CD4-positive, alpha-beta memory T cell (primary cell): ENCODE measurements at regions of chr21 and their contacts with region 1.

Region 1: DNA sequence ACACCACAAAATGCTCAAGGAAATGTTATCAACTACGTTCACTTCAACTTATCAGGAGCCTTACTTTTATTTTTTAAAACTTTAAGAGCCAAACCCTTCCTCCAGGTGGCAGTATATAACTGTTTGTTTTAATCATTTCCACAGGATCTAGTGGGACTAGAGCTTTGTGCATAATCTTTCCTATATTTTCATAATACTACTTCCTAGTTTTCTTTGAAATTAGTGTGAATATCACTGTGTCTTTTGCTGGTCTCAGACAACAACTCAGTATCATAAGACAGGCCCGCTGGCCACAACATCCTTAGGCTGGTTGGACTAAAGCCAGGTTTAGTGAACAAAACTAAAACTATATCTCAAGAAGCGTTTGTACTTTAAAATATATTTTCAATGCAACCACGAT is 145.5 kb downstream of the TIAM1 start:
- DNase-seq: peak in 3 of 5 donors; percentile 37 to 62 (median 54)
- H3K4me3 ChIP-seq: no peak overlapping the region
- H3K4me3 Mint-ChIP-seq: peak overlapping the region in 1 of 8 donors; percentile 31
- H3K27ac ChIP-seq: no peak overlapping the region
- H3K27ac Mint-ChIP-seq: peak overlapping the region in 2 of 7 donors; percentile 4 to 12
- H3K4me1 ChIP-seq: peaks cover 19% of the 10 kb centered on the region
- H3K4me1 Mint-ChIP-seq: peaks cover 21 to 41% (median 27%) of the 10 kb centered on the region in 4 donors
- H3K27me3 ChIP-seq: no peaks in the 10 kb centered on the region
- H3K27me3 Mint-ChIP-seq: no peaks in the 10 kb centered on the region

Region 2: DNA sequence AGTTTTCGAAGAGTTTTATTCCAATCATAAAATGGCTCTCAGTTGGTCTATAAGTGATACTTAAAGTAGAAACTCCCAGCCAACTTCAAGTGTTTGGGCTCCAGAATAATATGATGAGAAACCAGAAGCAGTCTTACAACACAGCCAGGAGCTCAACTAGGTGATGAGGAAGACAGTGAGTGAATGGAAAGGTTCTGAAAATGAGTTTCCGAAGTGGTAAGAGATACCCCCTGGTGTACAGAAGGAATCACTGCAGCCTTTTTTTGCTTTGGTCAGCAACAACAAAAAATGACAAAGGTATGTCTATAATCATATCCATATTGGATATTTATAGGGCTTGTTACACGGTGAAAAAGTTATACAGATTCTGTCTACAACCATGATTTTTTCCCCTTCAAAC is 734.9 kb before region 1 on chr21:
- CTCF ChIA-PET with region 1: no interaction called
- POLR2A ChIA-PET with region 1: no interaction called
- intact Hi-C with region 1: no loop called
- DNase-seq: no peak
- H3K4me3 ChIP-seq: no peak overlapping the region
- H3K4me3 Mint-ChIP-seq: no peak overlapping the region
- H3K27ac ChIP-seq: no peak overlapping the region
- H3K27ac Mint-ChIP-seq: no peak overlapping the region
- H3K4me1 ChIP-seq: no peaks in the 10 kb centered on the region
- H3K4me1 Mint-ChIP-seq: no peaks in the 10 kb centered on the region
- H3K27me3 ChIP-seq: no peaks in the 10 kb centered on the region
- H3K27me3 Mint-ChIP-seq: peaks cover 0 to 6% of the 10 kb centered on the region in 2 donors

Region 3: GRCh38 chr21:31185663-31186062 is 12.9 kb before region 1 on chr21:
- CTCF ChIA-PET with region 1: interaction called, 46 read pairs
- POLR2A ChIA-PET with region 1: interaction called, 42 read pairs
- intact Hi-C with region 1: loop called (anchors 1 kb)
- DNase-seq: peak in 3 of 5 donors; percentile 24 to 68 (median 27)
- H3K4me3 ChIP-seq: peak overlapping the region; percentile 70 to 85
- H3K4me3 Mint-ChIP-seq: peak overlapping the region; percentile 85 to 94 (median 90)
- H3K27ac ChIP-seq: peak overlapping the region; percentile 62
- H3K27ac Mint-ChIP-seq: peak overlapping the region; percentile 70 to 94 (median 92)
- H3K4me1 ChIP-seq: peaks cover 88% of the 10 kb centered on the region
- H3K4me1 Mint-ChIP-seq: peaks cover 58 to 84% (median 70%) of the 10 kb centered on the region in 4 donors
- H3K27me3 ChIP-seq: no peaks in the 10 kb centered on the region
- H3K27me3 Mint-ChIP-seq: no peaks in the 10 kb centered on the region

Region 4: DNA sequence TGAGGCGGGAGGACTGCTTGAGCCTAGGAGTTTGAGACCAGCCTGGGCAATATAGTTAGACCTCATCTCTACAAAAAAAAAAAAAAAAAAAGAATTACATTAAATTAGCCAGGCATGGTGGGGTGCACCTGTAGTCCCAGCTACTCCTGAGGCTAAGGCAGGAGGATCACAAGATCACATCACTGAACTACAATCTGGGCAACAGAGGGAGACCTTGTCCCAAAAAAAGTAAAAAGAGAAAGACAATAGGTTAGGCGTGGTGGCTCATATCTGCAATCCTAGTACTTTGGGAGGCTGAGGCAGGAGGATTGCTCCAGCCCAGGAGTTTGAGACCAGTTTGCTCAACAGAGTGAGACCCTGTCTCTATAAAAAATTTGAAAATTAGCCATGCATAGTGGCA is 15.2 kb after region 1 on chr21:
- CTCF ChIA-PET with region 1: interaction called, 15 read pairs
- POLR2A ChIA-PET with region 1: no interaction called
- intact Hi-C with region 1: no loop called
- DNase-seq: peak in 4 of 5 donors; percentile 10 to 24 (median 13)
- H3K4me3 ChIP-seq: no peak overlapping the region
- H3K4me3 Mint-ChIP-seq: no peak overlapping the region
- H3K27ac ChIP-seq: no peak overlapping the region
- H3K27ac Mint-ChIP-seq: peak overlapping the region in 1 of 7 donors; percentile 7
- H3K4me1 ChIP-seq: no peaks in the 10 kb centered on the region
- H3K4me1 Mint-ChIP-seq: no peaks in the 10 kb centered on the region
- H3K27me3 ChIP-seq: no peaks in the 10 kb centered on the region
- H3K27me3 Mint-ChIP-seq: no peaks in the 10 kb centered on the region

Region 5: DNA sequence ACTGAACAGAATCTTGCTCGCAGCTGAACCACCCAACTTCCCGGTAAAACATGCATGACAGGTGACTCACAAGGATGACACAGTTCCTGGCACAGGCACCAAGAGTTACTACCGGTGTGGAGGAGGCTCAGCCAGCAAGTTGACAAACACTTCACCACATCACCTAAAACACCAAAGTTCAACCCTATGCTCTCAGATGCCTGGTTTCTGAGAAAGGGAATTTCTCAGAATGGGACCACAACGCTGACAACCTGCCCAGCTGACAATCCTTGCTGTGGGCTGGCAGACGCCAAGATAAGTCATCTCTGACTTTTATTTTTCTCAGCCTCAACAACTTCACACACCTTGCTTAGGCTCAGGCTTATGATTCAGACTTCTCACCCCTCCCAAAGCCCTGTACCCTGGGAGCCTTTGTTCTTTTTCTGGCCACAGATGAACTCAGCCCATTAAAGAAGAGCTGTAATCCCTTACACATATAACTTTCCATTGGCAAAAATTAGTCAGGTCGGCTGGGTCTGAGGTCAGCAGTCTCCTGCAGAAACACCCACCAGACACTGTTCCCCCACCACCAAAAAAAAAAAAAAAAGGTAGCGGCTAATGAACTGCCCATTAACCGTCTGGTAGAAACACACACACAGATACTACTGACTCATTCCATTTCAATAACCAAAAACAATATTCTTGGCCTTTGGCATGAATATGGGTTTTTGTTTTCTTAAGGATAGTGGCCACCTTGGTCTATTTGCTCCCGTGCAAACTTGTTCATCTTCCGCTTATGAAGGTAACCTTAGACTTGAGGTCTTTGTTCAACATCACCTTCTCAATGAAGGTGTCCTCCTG is 156.2 kb after region 1 on chr21:
- CTCF ChIA-PET with region 1: no interaction called
- POLR2A ChIA-PET with region 1: no interaction called
- intact Hi-C with region 1: loop called (anchors 5 kb)
- DNase-seq: peak; percentile 74 to 92 (median 84)
- H3K4me3 ChIP-seq: no peak overlapping the region
- H3K4me3 Mint-ChIP-seq: peak overlapping the region in 7 of 8 donors; percentile 36 to 75 (median 64)
- H3K27ac ChIP-seq: peak overlapping the region; percentile 33
- H3K27ac Mint-ChIP-seq: peak overlapping the region; percentile 29 to 93 (median 90)
- H3K4me1 ChIP-seq: peaks cover 49% of the 10 kb centered on the region
- H3K4me1 Mint-ChIP-seq: peaks cover 29 to 60% (median 36%) of the 10 kb centered on the region in 4 donors
- H3K27me3 ChIP-seq: no peaks in the 10 kb centered on the region
- H3K27me3 Mint-ChIP-seq: no peaks in the 10 kb centered on the region

Region 6: DNA sequence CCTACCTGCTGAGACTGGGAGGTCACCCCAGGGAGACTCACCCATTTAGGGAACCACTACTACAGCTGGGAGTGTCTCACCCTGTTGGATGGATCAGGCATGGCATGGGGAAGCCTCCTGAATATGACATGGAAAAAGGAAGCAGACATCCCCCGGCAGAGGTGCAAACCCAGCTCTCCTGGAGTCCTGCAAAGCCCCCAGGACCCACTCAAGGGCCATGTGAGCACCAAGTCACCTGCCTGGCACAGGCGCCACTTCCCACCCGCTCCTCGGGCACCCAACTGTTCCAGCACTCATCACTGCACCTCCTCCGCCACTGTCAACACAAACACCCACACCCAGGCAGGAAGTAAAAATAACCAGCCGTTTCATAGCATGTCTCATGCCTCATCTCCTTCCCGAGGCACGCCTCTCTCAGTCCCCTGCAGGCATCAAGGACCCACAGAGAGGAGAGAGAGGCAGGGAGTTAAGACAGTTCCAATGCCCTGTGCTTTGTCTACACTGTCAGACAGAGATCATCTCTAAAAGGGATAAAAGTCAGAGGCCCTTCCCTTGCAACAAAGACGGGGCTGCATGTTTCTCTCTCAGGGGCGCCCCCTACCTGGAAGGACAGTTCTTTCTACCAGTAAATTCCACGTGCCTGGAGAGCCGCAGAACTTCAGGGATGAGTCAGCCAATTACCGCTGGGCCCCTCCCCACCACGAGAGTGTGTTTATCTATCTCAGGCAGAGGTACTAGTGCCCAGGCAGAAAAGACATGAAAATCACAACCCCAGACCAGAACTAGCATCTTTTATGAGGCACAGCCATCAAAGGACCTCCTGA is 310.8 kb after region 1 on chr21:
- CTCF ChIA-PET with region 1: no interaction called
- POLR2A ChIA-PET with region 1: no interaction called
- intact Hi-C with region 1: loop called (anchors 1 kb)
- DNase-seq: peak; percentile 57 to 74 (median 62)
- H3K4me3 ChIP-seq: no peak overlapping the region
- H3K4me3 Mint-ChIP-seq: peak overlapping the region; percentile 36 to 78 (median 55)
- H3K27ac ChIP-seq: no peak overlapping the region
- H3K27ac Mint-ChIP-seq: peak overlapping the region in 6 of 7 donors; percentile 0 to 87 (median 66)
- H3K4me1 ChIP-seq: peaks cover 15% of the 10 kb centered on the region
- H3K4me1 Mint-ChIP-seq: peaks cover 16 to 40% (median 28%) of the 10 kb centered on the region in 4 donors
- H3K27me3 ChIP-seq: no peaks in the 10 kb centered on the region
- H3K27me3 Mint-ChIP-seq: peaks cover 0 to 3% of the 10 kb centered on the region in 2 donors

Region 7: GRCh38 chr21:31580866-31581276 is 382.3 kb after region 1 on chr21:
- CTCF ChIA-PET with region 1: interaction called, 266 read pairs
- POLR2A ChIA-PET with region 1: interaction called, 3 read pairs
- intact Hi-C with region 1: loop called (anchors 1 kb)
- DNase-seq: peak; percentile 58 to 72 (median 66)
- H3K4me3 ChIP-seq: no peak overlapping the region
- H3K4me3 Mint-ChIP-seq: no peak overlapping the region
- H3K27ac ChIP-seq: no peak overlapping the region
- H3K27ac Mint-ChIP-seq: no peak overlapping the region
- H3K4me1 ChIP-seq: no peaks in the 10 kb centered on the region
- H3K4me1 Mint-ChIP-seq: peaks cover 3 to 6% (median 4%) of the 10 kb centered on the region in 4 donors
- H3K27me3 ChIP-seq: no peaks in the 10 kb centered on the region
- H3K27me3 Mint-ChIP-seq: peaks cover 0 to 3% of the 10 kb centered on the region in 2 donors

Region 8: DNA sequence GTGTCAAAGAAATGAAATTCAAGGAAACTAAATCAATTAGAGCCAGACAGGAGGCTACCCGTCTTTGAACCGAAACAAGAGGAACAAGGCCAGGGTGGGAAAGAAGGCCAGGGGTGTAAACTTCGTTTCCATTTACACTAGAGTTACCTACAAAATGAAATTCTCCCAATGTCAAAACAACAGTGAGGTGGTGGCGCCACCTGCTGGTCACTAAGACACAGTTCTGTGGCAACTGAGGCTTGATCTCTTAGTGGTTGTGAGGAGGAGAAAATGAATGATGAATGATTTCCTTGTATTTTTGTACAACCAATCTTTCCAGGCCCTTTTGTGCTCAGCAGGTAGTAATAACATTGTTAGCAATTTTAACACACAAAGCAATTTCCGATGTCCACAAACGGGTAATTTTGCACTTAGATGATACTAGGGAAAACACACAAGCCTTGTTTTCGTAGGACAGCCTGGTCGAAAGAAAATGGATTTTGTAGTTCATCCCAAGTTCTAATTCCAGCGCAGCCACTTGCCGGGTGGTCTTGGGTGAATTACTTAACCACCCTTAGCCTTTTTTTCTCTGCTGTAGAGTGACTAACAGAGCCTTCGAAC is 406.1 kb after region 1 on chr21:
- CTCF ChIA-PET with region 1: interaction called, 7 read pairs
- POLR2A ChIA-PET with region 1: interaction called, 4 read pairs
- intact Hi-C with region 1: loop called (anchors 1 kb)
- DNase-seq: peak; percentile 52 to 63 (median 61)
- H3K4me3 ChIP-seq: no peak overlapping the region
- H3K4me3 Mint-ChIP-seq: peak overlapping the region in 1 of 8 donors; percentile 23
- H3K27ac ChIP-seq: no peak overlapping the region
- H3K27ac Mint-ChIP-seq: peak overlapping the region in 1 of 7 donors; percentile 43
- H3K4me1 ChIP-seq: no peaks in the 10 kb centered on the region
- H3K4me1 Mint-ChIP-seq: peaks cover 0 to 5% (median under 1%) of the 10 kb centered on the region in 4 donors
- H3K27me3 ChIP-seq: no peaks in the 10 kb centered on the region
- H3K27me3 Mint-ChIP-seq: peaks cover 3 to 6% of the 10 kb centered on the region in 2 donors